Activated CD4-positive, alpha-beta T cell treated with anti-CD3 and anti-CD28 coated beads, Interleukin-2, amount 10 ng/mL, durations not matched to agents 24 days and 14 days (primary cell): ENCODE measurements at regions of chr6 and their contacts with region 1.

Region 1: GRCh38 chr6:138588805-138589434 is 89.6 kb upstream of the NHSL1 start:
- DNase-seq: peak; percentile 87
- H3K4me3 Mint-ChIP-seq: no peak overlapping the region
- H3K27ac Mint-ChIP-seq: no peak overlapping the region
- H3K4me1 Mint-ChIP-seq: peaks cover 18% of the 10 kb centered on the region
- H3K27me3 Mint-ChIP-seq: peaks cover 1% of the 10 kb centered on the region

Region 2: GRCh38 chr6:138403801-138404661 is 184.9 kb before region 1 on chr6 and contains the start of gene HEBP2:
- intact Hi-C with region 1: loop called (anchors 10 kb)
- DNase-seq: peak; percentile 97
- H3K4me3 Mint-ChIP-seq: peak within 1 kb of the TSS; percentile 82
- H3K27ac Mint-ChIP-seq: peak within 1 kb of the TSS; percentile 58
- H3K4me1 Mint-ChIP-seq: peaks cover 12% of the 10 kb centered on the region
- H3K27me3 Mint-ChIP-seq: peaks cover 15% of the 10 kb centered on the region
- total RNA-seq, gene HEBP2: 16.2 and 17.4 TPM in 2 replicates

Region 3: DNA sequence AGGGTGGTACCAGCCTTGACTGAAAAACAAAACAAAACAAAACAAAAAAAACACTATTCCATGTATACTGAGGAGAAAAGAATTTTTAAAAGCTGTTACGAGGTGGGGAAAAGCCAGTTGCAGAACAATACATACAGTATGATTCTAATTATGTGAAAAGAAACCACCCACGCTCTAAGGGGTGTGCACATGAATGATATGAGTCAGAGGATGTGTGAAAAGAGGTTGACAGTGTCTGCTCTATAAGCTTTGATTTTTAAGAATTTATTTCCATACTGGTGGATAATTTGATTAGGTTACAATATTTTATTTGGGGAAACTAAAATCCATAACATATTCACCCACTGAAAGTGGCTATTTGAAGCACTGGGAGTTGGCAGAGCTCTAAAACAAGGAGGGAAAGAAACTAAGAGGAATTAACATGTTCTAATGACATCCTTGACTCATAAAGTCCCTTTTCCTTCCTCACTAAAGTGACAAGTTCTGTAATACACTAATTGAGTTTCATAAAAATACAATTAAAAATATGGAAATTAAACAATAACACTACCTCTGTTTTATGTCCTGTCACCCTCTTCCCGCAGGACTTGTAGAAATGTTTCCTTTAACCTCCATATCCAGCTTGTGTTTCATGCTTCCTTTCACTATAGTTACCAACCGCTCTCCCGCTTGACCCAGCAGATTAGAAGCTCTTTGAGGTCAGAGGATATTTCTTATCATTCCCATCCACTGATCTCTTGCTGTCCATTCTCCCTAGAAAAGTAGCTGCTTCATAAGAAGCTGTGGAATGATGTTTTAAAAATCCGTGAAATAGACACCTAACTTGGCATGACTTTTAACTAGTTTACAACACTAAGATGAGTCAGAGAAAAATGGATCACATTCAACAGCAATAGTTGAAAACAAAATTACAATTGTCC is 66.1 kb after region 1 on chr6:
- intact Hi-C with region 1: loop called (anchors 1 kb)
- DNase-seq: peak; percentile 61
- H3K4me3 Mint-ChIP-seq: no peak overlapping the region
- H3K27ac Mint-ChIP-seq: no peak overlapping the region
- H3K4me1 Mint-ChIP-seq: peaks cover 13% of the 10 kb centered on the region
- H3K27me3 Mint-ChIP-seq: peaks cover 25% of the 10 kb centered on the region

Region 4: DNA sequence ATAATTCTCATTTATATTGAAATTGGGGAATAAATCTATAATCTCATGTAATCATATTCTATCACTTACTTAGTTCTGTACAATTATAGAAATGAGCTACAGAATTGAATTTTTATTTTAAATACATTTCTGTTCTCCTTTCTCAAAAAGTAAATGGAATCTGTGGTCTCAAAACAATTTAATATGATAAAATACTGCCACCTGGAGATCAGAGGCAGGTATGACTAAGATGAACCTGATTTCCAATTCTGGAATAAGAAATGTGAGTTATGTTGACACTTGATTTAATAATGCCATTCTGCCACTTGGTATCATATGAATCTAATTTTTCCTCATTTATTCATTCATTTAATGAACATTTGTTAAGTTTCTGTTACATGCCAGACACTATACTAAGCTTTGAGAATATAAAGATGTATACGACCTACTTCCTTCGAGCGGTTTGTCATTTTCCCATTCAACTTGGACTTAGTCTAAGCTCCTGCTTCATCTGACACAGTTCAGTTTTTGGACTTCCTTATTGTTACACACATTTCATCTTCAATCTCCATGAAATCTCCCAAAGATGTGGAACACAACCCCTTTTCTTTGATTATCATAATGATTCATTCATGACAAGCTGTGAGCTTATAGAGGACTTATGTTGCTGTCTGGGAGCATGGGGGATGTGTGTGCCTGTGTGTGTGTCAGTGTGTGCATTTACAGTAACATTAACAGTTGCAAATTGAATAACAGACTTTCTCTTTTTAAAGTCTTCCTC is 177.2 kb after region 1 on chr6:
- intact Hi-C with region 1: loop called (anchors 1 kb)
- DNase-seq: no peak
- H3K4me3 Mint-ChIP-seq: no peak overlapping the region
- H3K27ac Mint-ChIP-seq: no peak overlapping the region
- H3K4me1 Mint-ChIP-seq: peaks cover 9% of the 10 kb centered on the region
- H3K27me3 Mint-ChIP-seq: no peaks in the 10 kb centered on the region

Region 5: GRCh38 chr6:138987640-138988468 is 398.9 kb after region 1 on chr6 and contains the start of gene REPS1:
- intact Hi-C with region 1: loop called (anchors 5 kb)
- DNase-seq: peak; percentile 98
- H3K4me3 Mint-ChIP-seq: peak within 1 kb of the TSS; percentile 91
- H3K27ac Mint-ChIP-seq: peak within 1 kb of the TSS; percentile 97
- H3K4me1 Mint-ChIP-seq: peaks cover 19% of the 10 kb centered on the region
- H3K27me3 Mint-ChIP-seq: peaks cover under 1% of the 10 kb centered on the region
- total RNA-seq, gene REPS1: 65.8 and 70.1 TPM in 2 replicates